ENCODE measurements at regions of chr1 and their contacts with region 1.

Region 1: GRCh38 chr1:54488779-54489626 is 59.0 kb upstream of the ACOT11 start:
- DNase-seq: no peak
- H3K4me3 ChIP-seq: peak overlapping the region; percentile 56
- CTCF ChIP-seq: peak; percentile 84

Region 2: DNA sequence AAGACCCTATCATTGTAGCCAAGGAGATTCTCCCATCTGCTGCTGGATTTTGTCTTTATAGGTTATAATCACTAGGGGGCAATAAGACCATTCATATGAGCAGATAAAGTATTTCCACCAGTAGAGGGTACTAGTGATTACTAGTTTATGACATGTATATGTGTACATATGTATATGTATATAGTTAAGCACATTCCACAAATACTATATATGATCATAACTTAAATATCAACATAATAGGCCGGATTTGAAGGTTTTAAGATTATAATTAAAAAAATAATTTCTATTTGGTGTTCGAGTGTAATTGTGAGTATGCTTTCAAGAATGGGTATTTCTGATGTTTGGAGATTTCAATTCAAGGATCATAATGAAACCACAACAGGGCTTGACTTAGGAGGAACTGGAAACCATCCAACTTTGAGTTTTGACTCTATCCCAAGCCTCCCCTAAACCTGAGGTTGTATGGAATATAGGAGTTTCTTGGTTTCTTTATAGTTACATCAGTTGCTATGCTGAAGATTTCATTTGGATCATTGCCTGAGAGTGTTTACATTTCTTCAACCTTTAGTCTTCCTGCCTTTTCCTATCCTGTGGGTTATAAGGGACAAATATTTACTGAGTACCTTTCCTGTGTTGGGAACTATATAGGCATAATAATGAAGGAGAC is 418.7 kb before region 1 on chr1:
- CTCF ChIA-PET with region 1: interaction called, 36 read pairs
- POLR2A ChIA-PET with region 1: no interaction called
- DNase-seq: no peak
- H3K4me3 ChIP-seq: no peak overlapping the region
- CTCF ChIP-seq: peak; percentile 72

Region 3: GRCh38 chr1:54121482-54122134 is 367.4 kb before region 1 on chr1:
- CTCF ChIA-PET with region 1: interaction called, 21 read pairs
- POLR2A ChIA-PET with region 1: interaction called, 6 read pairs
- DNase-seq: peak; percentile 23
- H3K4me3 ChIP-seq: peak overlapping the region; percentile 20
- CTCF ChIP-seq: peak; percentile 95

Region 4: DNA sequence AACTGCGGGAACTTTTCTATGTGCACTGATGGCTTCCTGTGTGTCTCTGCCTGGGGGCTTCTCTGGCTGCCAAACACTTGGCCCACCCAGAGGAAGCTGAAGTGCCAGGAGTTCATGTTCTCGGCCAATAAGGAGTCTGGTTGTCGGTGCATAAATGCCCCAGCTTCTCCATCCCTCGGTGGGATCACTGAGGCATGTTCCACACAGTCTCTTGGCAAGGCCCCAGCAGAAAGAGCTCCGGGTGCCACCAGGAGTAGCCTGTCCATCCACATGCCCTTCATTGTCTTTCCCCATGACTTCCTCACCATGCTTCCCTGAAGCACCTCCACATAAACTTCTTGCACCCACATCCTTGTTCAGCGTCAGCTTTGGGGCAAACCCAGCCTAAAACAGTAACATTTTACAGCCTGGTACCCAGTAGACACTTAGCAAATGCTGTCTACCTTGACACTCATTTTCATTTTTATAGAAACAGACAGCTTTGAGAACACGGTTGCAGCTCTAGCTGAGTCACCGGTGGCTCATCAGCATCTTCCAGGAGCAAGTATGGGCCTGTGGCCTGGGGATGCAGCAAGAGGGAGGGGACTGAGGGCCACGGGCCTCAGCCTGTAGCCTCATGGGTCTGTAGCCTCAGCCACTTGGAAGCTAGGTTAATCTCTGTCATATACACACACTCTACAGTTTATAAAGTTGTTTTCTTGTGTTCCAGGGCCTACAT is 321.4 kb before region 1 on chr1:
- CTCF ChIA-PET with region 1: no interaction called
- POLR2A ChIA-PET with region 1: no interaction called
- DNase-seq: no peak
- H3K4me3 ChIP-seq: no peak overlapping the region
- CTCF ChIP-seq: no peak

Region 5: GRCh38 chr1:54227091-54227602 is 261.9 kb before region 1 on chr1:
- CTCF ChIA-PET with region 1: interaction called, 15 read pairs
- POLR2A ChIA-PET with region 1: no interaction called
- DNase-seq: no peak
- H3K4me3 ChIP-seq: no peak overlapping the region
- CTCF ChIP-seq: no peak

Region 6: DNA sequence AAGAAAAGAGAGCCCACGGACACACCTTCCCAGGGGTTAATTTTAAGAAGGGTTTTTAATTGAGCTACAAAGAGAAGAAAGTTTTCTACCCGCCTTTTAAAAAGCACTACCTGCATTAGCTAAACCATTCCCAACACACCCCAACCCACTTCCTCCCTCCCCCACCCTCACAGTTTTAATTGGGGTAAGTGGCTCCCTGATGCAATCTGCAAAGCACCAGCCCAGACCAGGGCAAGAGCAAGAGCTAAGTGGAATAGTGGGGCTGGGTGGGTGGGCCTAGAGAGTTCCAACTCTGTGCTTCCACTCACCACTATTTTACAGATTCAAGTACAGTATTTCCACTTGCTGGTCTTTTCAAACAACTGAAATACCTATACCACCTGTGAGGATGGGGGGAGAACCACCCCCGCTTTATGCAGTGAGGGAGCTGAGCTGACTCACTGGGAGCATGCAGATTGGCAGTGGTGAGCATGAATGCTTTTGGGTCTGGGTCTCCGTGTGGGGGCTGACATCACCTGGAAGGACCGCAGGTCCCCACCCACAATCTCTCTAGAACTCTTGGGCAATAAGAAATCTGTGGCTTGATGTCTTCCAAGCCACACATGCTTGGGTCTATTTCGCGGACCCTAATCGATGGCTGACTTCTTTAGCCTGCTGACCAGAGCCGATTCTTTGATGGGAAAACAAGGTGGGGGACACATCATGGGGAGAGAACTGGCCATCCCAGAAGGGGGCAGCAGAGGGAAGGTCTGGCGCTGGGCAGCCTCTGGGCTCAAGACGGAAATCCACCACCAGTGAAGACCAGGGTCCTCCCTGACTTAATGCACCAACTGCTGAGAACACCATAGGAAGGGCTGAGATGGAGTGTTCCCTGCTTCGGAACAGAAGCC is 178.3 kb before region 1 on chr1:
- CTCF ChIA-PET with region 1: interaction called, 16 read pairs
- POLR2A ChIA-PET with region 1: no interaction called
- DNase-seq: no peak
- H3K4me3 ChIP-seq: no peak overlapping the region
- CTCF ChIP-seq: peak; percentile 60

Region 7: DNA sequence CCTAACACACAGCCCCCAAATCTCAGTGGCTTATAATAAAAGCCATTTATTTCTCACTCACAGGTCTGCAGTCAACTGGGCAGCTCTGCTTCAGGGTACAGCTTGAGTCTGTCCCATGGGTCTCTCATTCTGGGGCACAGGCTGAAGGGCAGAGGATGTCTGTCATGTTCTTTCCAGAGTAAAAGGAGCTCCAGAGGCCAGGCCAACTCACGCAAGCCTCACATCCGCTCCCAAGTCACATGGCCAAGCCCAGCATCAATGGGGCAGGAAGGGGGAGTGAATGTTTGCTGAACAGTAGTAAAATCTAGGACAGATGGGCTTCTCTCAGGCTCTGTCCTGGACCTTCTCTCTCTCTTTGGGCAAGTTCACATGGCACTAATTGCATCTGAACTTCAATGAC is 75.7 kb before region 1 on chr1:
- CTCF ChIA-PET with region 1: interaction called, 16 read pairs
- POLR2A ChIA-PET with region 1: no interaction called
- DNase-seq: no peak
- H3K4me3 ChIP-seq: no peak overlapping the region
- CTCF ChIP-seq: no peak

Measured in AG04449 (cell line).